ENCODE measurements at regions of chr14 and their contacts with region 1.

Region 1: DNA sequence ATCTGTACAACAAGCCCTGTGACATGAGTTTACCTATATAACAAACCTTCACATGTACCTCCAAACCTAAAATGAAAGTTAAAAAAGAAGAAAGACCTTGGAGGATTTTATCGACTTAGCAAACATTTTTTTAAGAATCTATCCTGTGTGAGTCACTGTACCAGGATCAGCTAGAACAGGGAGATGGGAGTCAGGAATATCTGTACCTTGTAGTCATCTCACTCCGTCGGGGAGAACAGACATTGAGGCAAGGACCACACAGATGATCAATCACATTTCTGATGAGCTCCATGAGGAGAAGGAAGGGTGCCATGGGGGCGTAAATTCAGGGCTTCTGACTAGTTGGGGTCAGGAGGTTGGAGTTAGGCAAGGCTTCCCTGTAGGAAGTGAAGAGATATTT is 310.6 kb downstream of the VRK1 start:
- DNase-seq: no peak
- H3K4me3 ChIP-seq: no peak overlapping the region
- H3K27ac ChIP-seq: no peak overlapping the region
- H3K27me3 ChIP-seq: peaks cover 0 to 17% (median 0%) of the 10 kb centered on the region in 45 donors
- CTCF ChIP-seq: no peak

Region 2: GRCh38 chr14:97080991-97081390 is 26.8 kb before region 1 on chr14:
- intact Hi-C with region 1: loop called in 1 of 2 experiments (anchors 2 kb)
- DNase-seq: no peak
- H3K4me3 ChIP-seq: no peak overlapping the region
- H3K27ac ChIP-seq: no peak overlapping the region
- H3K27me3 ChIP-seq: peaks cover 0 to 18% (median 0%) of the 10 kb centered on the region in 45 donors
- CTCF ChIP-seq: no peak

Region 3: GRCh38 chr14:97126931-97127330 is 19.2 kb after region 1 on chr14:
- intact Hi-C with region 1: no loop called
- DNase-seq: no peak
- H3K4me3 ChIP-seq: no peak overlapping the region
- H3K27ac ChIP-seq: no peak overlapping the region
- H3K27me3 ChIP-seq: peaks cover 0 to 7% (median 0%) of the 10 kb centered on the region in 45 donors
- CTCF ChIP-seq: no peak

Region 4: GRCh38 chr14:98069712-98070171 is 962.0 kb after region 1 on chr14:
- intact Hi-C with region 1: no loop called
- DNase-seq: no peak
- H3K4me3 ChIP-seq: no peak overlapping the region
- H3K27ac ChIP-seq: no peak overlapping the region
- H3K27me3 ChIP-seq: peaks cover 0 to 18% (median 0%) of the 10 kb centered on the region in 45 donors
- CTCF ChIP-seq: no peak

Measured in dorsolateral prefrontal cortex (tissue), 120 donors.